ENCODE measurements at regions of chr19 and their contacts with region 1.

Region 1: DNA sequence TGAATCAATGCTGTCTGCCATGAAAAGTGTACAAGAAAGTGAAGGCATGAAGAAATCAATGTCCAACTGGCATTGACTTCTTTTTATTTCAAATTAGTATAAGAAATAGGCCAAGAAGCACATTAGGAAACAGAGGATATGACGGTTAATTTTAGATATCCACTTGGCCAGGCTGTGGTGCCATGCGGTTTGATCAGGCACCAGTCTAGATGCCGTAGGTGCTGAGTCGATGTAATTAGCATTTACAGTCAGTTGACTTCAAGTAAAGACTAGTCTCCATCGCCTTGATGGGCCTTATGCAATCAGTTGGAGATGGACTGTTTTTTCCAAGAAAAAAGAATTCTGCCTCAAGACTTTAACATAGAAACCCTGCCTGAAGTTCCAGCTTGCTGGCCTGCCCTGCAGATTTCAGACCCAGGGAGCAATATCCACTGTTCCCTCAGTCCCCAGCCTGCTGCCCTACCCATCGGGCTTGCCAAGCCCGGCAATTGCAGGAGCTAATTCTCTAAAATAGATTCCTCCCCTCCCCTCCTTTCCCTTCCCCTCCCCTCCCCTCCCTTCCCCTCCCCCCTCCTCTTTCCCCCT is 120.5 kb upstream of the PEG3 start:
- DNase-seq: no peak
- H3K4me3 ChIP-seq: no peak overlapping the region
- H3K27ac ChIP-seq: no peak overlapping the region
- H3K4me1 ChIP-seq: no peaks in the 10 kb centered on the region
- H3K27me3 ChIP-seq: no peaks in the 10 kb centered on the region
- CTCF ChIP-seq: no peak

Region 2: GRCh38 chr19:57002710-57003109 is 41.7 kb after region 1 on chr19:
- CTCF ChIA-PET with region 1: no interaction called
- dilution Hi-C with region 1: loop called (anchors 5 kb)
- in situ Hi-C with region 1: no loop called
- intact Hi-C with region 1: no loop called
- DNase-seq: no peak
- H3K4me3 ChIP-seq: no peak overlapping the region
- H3K27ac ChIP-seq: no peak overlapping the region
- H3K4me1 ChIP-seq: no peaks in the 10 kb centered on the region
- H3K27me3 ChIP-seq: no peaks in the 10 kb centered on the region
- CTCF ChIP-seq: no peak